ENCODE measurements at regions of chr20 and their contacts with region 1.

Region 1: GRCh38 chr20:44609511-44610312 is 27.3 kb downstream of the PKIG start:
- DNase-seq: peak; percentile 94
- ATAC-seq: peak; percentile 88

Region 2: GRCh38 chr20:44388466-44389023 is 221.2 kb before region 1 on chr20:
- intact Hi-C with region 1: loop called (anchors 10 kb)
- DNase-seq: peak; percentile 76
- ATAC-seq: peak; percentile 76

Region 3: GRCh38 chr20:44471481-44471882 is 138.2 kb before region 1 on chr20:
- intact Hi-C with region 1: no loop called
- DNase-seq: no peak
- ATAC-seq: no peak

Region 4: GRCh38 chr20:44532259-44532980 is 77.3 kb before region 1 on chr20:
- intact Hi-C with region 1: loop called (anchors 10 kb)
- DNase-seq: peak; percentile 42
- ATAC-seq: peak; percentile 52

Measured in left ventricle myocardium superior (tissue), 1 donor.